ENCODE measurements at regions of chr1 and their contacts with region 1.

Region 1: GRCh38 chr1:26695356-26696118 is at the start of gene ARID1A:
- H3K4me3 ChIP-seq: peak within 1 kb of the TSS; percentile 72
- H3K27ac ChIP-seq: peak within 1 kb of the TSS; percentile 92
- H3K4me1 ChIP-seq: peaks cover 19% of the 10 kb centered on the region
- CTCF ChIP-seq: peak; percentile 75

Region 2: GRCh38 chr1:26677306-26678115 is 18.0 kb before region 1 on chr1:
- CTCF ChIA-PET with region 1: interaction called, 23 read pairs
- POLR2A ChIA-PET with region 1: interaction called, 18 read pairs
- H3K4me3 ChIP-seq: no peak overlapping the region
- H3K27ac ChIP-seq: no peak overlapping the region
- H3K4me1 ChIP-seq: no peaks in the 10 kb centered on the region
- CTCF ChIP-seq: peak; percentile 97

Region 3: GRCh38 chr1:26705788-26706311 is 10.3 kb after region 1 on chr1:
- CTCF ChIA-PET with region 1: interaction called, 3 read pairs
- POLR2A ChIA-PET with region 1: interaction called, 10 read pairs
- H3K4me3 ChIP-seq: no peak overlapping the region
- H3K27ac ChIP-seq: 0 out of 2 replicates have a peak overlapping the region, but pooled peaks have one; percentile 1
- H3K4me1 ChIP-seq: peaks cover 36% of the 10 kb centered on the region
- CTCF ChIP-seq: no peak

Region 4: DNA sequence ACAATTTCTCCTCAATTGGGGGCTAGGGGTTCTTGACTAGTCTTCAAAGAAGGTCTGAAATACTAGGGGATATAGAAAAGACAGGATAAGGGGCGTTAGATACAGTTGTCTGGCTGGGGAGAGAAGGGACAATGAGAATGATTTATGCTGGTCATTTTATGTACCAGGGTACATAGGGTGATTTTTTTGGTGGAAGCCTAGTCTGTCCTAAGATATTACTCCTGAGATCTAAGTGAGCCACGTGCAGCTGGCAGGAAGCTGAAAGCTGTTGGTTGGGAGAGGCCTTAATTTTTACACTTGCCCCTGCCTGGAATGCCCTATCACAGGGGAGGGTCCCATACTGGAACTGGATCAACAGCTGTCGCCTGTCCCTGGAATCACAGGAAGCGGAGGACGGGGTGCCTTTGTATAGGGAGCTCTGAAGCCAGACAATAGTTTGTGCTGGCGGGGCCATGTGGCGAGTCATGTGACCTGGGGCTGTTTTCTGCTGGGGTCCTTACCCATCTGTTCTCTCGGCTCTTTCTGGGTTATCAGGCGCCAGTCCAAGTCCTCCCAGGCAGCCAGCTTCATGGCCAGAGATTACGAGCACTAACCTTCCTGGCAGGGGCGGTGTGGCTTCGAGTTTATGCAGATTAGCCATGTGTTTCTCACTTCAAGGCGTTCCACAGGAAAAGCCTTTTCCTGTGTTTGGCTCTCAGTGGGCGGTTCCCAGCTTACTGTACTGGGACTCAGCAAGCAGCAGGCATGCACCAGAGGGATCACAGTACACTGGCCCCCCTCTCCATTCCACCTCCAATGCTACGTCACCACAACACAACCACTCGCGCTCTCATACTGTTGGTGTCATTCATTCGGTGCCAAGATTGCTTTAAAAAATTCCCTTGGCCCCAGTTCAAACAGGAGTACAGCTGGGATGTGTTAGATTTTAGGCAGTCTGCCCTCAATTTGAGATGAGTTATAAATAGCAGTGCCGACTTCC is 27.8 kb after region 1 on chr1:
- CTCF ChIA-PET with region 1: interaction called, 4 read pairs
- POLR2A ChIA-PET with region 1: interaction called, 16 read pairs
- H3K4me3 ChIP-seq: no peak overlapping the region
- H3K27ac ChIP-seq: no peak overlapping the region
- H3K4me1 ChIP-seq: peaks cover 13% of the 10 kb centered on the region
- CTCF ChIP-seq: no peak

Region 5: GRCh38 chr1:26771643-26772321 is 76.2 kb after region 1 on chr1:
- CTCF ChIA-PET with region 1: interaction called, 3 read pairs
- POLR2A ChIA-PET with region 1: interaction called, 18 read pairs
- H3K4me3 ChIP-seq: no peak overlapping the region
- H3K27ac ChIP-seq: no peak overlapping the region
- H3K4me1 ChIP-seq: no peaks in the 10 kb centered on the region
- CTCF ChIP-seq: no peak

Measured in HEK293 (cell line).